Naive thymus-derived CD4-positive, alpha-beta T cell (primary cell): ENCODE measurements at regions of chr10 and their contacts with region 1.

Region 1: DNA sequence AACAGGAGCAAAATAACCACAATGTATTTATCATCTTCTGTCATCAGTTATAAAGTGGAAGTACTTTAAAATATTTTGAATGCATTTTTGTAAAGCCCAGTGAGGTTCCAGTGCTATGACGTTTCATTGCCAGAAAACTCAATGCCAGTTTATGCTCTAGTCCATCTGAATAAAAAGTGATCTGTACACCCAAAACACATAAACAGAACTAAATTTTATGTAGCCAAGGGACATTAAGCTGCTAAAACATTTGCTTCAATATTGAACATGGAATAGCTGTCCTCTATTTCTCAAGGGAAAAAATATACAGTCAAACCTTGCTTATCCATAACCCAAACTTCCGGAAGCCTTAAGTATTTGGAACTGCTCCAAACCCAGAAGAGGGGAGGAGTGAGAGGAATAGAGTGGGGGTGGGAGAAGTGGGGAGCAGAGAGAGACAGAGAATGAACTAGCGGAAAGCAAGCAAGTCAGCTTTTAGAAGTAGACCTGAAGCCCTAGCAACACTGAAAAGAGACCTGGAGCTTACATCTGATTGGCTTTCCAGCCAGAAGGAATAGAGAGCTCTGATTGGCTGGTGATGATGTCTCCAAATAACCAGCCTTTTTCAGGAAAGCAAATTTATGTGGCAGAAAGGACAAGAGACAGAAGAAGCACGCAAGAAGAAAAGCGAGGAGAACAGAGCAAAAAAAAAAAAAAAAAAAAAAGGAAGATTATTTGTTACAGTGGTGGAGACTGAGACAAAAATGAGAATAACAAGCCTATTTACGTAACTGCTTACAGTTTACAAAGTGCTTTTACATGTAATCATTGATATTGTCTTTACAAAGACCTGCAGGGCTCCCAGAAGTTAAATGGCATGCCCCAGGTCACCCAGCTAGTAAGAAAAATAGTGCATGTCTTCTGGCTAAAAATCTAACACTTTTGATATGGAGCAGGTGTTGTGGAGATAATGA is 196.0 kb downstream of the RNLS start:
- DNase-seq: peak in 7 of 9 donors; percentile 45 to 66 (median 54)
- ATAC-seq: peak; percentile 57
- H3K4me3 ChIP-seq: peak overlapping the region; percentile 45
- H3K4me3 Mint-ChIP-seq: no peak overlapping the region
- H3K27ac ChIP-seq: peak overlapping the region; percentile 82
- H3K27ac Mint-ChIP-seq: no peak overlapping the region
- H3K4me1 ChIP-seq: peaks cover 44 to 69% of the 10 kb centered on the region in 2 donors
- H3K4me1 Mint-ChIP-seq: peaks cover 6 to 41% (median 37%) of the 10 kb centered on the region in 7 donors
- H3K27me3 ChIP-seq: no peaks in the 10 kb centered on the region
- H3K27me3 Mint-ChIP-seq: no peaks in the 10 kb centered on the region

Region 2: GRCh38 chr10:88027570-88027969 is 359.5 kb before region 1 on chr10:
- CTCF ChIA-PET with region 1: no interaction called
- POLR2A ChIA-PET with region 1: no interaction called
- intact Hi-C with region 1: loop called in 1 of 2 experiments (anchors 5 kb)
- DNase-seq: no peak
- ATAC-seq: peak; percentile 75
- H3K4me3 ChIP-seq: no peak overlapping the region
- H3K4me3 Mint-ChIP-seq: no peak overlapping the region
- H3K27ac ChIP-seq: no peak overlapping the region
- H3K27ac Mint-ChIP-seq: peak overlapping the region in 7 of 9 donors; percentile 12 to 90 (median 76)
- H3K4me1 ChIP-seq: peaks cover 11 to 15% of the 10 kb centered on the region in 2 donors
- H3K4me1 Mint-ChIP-seq: peaks cover 10 to 31% (median 18%) of the 10 kb centered on the region in 7 donors
- H3K27me3 ChIP-seq: no peaks in the 10 kb centered on the region
- H3K27me3 Mint-ChIP-seq: no peaks in the 10 kb centered on the region

Region 3: DNA sequence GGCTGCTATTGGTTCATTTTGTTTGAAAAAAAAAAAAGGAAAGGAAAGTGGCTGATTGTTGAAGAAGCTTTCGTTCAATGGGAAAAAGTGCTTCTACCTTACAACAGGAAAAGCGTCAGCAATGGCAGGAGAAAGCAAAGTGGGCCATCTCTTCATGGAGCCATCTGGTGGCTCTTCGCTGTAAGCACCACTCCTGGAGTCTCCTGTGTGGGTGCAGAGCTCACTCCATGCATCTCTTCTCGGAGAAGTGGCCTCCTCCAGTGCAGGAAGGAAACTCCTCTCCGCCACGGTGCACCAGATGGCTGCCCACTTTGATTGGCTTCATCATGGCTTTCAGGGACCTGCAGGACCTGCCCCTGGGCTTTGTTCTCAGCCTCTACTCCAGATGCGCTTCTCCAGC is 272.7 kb before region 1 on chr10:
- CTCF ChIA-PET with region 1: interaction called, 25 read pairs
- POLR2A ChIA-PET with region 1: interaction called, 3 read pairs
- intact Hi-C with region 1: loop called in 1 of 2 experiments (anchors 1 kb)
- DNase-seq: peak in 5 of 9 donors; percentile 11 to 48 (median 37)
- ATAC-seq: peak; percentile 74
- H3K4me3 ChIP-seq: no peak overlapping the region
- H3K4me3 Mint-ChIP-seq: peak overlapping the region in 5 of 10 donors; percentile 3 to 52 (median 32)
- H3K27ac ChIP-seq: no peak overlapping the region
- H3K27ac Mint-ChIP-seq: no peak overlapping the region
- H3K4me1 ChIP-seq: peaks cover 11 to 26% of the 10 kb centered on the region in 2 donors
- H3K4me1 Mint-ChIP-seq: peaks cover 4 to 32% (median 15%) of the 10 kb centered on the region in 7 donors
- H3K27me3 ChIP-seq: no peaks in the 10 kb centered on the region
- H3K27me3 Mint-ChIP-seq: peaks cover 0 to 12% (median 0%) of the 10 kb centered on the region in 5 donors

Region 4: GRCh38 chr10:88270871-88271713 is 116.0 kb before region 1 on chr10:
- CTCF ChIA-PET with region 1: interaction called, 3 read pairs
- POLR2A ChIA-PET with region 1: interaction called, 3 read pairs
- intact Hi-C with region 1: loop called (anchors 1 kb)
- DNase-seq: peak in 7 of 9 donors; percentile 8 to 54 (median 26)
- ATAC-seq: peak; percentile 79
- H3K4me3 ChIP-seq: peak overlapping the region; percentile 12
- H3K4me3 Mint-ChIP-seq: peak overlapping the region; percentile 29 to 78 (median 66)
- H3K27ac ChIP-seq: peak overlapping the region; percentile 33
- H3K27ac Mint-ChIP-seq: peak overlapping the region; percentile 44 to 89 (median 83)
- H3K4me1 ChIP-seq: peaks cover 13 to 18% of the 10 kb centered on the region in 2 donors
- H3K4me1 Mint-ChIP-seq: peaks cover 23 to 65% (median 38%) of the 10 kb centered on the region in 7 donors
- H3K27me3 ChIP-seq: no peaks in the 10 kb centered on the region
- H3K27me3 Mint-ChIP-seq: peaks cover 0 to 8% (median 0%) of the 10 kb centered on the region in 5 donors

Region 5: GRCh38 chr10:88553116-88553752 is 166.1 kb after region 1 on chr10:
- CTCF ChIA-PET with region 1: interaction called, 3 read pairs
- POLR2A ChIA-PET with region 1: no interaction called
- intact Hi-C with region 1: loop called (anchors 1 to 5 kb)
- DNase-seq: peak in 7 of 9 donors; percentile 26 to 59 (median 53)
- ATAC-seq: peak; percentile 89
- H3K4me3 ChIP-seq: no peak overlapping the region
- H3K4me3 Mint-ChIP-seq: no peak overlapping the region
- H3K27ac ChIP-seq: no peak overlapping the region
- H3K27ac Mint-ChIP-seq: no peak overlapping the region
- H3K4me1 ChIP-seq: no peaks in the 10 kb centered on the region
- H3K4me1 Mint-ChIP-seq: peaks cover 0 to 2% (median 0%) of the 10 kb centered on the region in 7 donors
- H3K27me3 ChIP-seq: no peaks in the 10 kb centered on the region
- H3K27me3 Mint-ChIP-seq: peaks cover 0 to 11% (median 0%) of the 10 kb centered on the region in 5 donors

Region 6: DNA sequence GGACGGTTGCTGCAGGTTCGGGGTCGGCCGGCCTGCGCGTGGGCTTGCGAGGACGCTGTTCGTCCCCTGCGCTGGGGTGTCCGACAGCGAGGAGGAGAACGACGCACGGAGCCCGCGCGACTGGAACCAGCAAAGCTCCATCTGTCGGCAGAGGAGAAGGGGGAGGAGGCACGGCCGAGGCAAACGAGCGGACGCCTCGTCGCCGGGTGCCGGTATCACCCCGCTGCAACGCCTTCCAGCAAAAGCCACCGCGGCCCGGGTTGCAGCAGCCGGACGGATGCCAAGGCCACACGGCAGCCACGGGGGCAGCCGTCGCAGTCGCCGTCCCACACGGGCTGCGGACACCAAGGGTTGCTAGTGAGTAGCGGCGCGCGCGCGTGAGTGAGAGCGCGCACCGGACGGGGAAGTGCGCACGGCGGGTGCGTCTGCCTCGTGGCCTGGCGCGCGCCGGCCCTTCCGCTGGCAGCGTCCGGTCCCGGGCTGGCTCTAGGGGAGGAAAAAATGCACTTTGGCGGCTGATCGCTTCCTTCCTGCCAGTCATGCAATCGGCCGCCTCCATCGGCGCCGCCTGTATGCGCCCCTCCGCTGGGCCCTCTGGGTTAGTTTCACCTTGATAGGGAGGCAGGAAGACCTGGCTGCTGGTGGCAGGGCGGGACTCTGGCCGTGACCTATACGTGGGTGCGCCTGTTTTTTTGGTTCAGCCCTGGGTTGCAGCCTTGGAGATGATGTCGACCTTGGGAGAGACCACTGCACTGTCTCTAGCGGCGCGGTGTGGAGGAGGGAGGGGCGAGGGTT is 493.4 kb after region 1 on chr10:
- CTCF ChIA-PET with region 1: no interaction called
- POLR2A ChIA-PET with region 1: no interaction called
- intact Hi-C with region 1: loop called in 1 of 2 experiments (anchors 5 kb)
- DNase-seq: peak; percentile 58 to 79 (median 75)
- ATAC-seq: peak; percentile 84
- H3K4me3 ChIP-seq: peak overlapping the region; percentile 85
- H3K4me3 Mint-ChIP-seq: peak overlapping the region; percentile 95 to 100 (median 98)
- H3K27ac ChIP-seq: peak overlapping the region; percentile 74
- H3K27ac Mint-ChIP-seq: peak overlapping the region; percentile 82 to 97 (median 95)
- H3K4me1 ChIP-seq: peaks cover 43 to 44% of the 10 kb centered on the region in 2 donors
- H3K4me1 Mint-ChIP-seq: peaks cover 43 to 79% (median 69%) of the 10 kb centered on the region in 7 donors
- H3K27me3 ChIP-seq: no peaks in the 10 kb centered on the region
- H3K27me3 Mint-ChIP-seq: no peaks in the 10 kb centered on the region